Motor neuron (in vitro differentiated cells): ENCODE measurements at regions of chr20 and their contacts with region 1.

Region 1: DNA sequence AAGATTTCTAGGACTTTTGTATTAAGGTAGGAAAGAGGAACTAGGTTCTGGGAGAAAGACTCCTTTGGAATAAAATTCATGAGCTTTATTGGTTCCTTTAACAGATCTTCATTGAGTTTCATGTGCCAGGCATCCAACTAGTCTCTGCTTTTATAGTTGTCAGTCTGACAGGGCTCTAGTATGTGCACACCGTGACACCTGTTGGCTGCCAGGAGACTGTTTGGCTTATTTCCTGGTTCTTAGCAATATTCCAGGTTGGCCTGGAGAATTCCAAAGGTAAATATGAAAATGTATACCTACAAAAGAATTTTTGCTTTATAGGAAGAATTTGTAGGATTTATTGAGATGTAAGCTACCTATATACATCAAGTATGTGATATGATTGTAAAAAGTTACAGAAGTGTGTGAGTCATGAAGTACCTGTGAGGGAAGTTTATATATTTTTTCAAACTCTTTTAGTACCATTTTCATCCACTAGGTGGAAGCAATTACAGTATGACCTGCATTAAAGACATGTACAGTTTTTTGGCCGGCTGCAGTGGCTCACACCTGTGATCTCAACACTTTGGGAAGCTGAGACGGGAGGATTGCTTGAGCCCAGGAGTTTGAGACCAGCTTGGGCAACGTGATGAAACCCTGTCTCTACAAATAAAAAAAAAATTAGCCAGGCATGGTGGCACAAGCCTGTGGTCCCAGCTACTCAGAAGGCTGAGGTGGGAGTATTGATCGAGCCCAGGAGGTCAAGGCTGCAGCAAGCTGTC is 35.2 kb downstream of the NDUFAF5 start:
- ATAC-seq: peak in 6 of 8 experiments; percentile 10 to 53 (median 38)
- H3K4me3 ChIP-seq: no peak overlapping the region
- H3K27ac ChIP-seq: no peak overlapping the region
- H3K4me1 ChIP-seq: no peaks in the 10 kb centered on the region

Region 2: DNA sequence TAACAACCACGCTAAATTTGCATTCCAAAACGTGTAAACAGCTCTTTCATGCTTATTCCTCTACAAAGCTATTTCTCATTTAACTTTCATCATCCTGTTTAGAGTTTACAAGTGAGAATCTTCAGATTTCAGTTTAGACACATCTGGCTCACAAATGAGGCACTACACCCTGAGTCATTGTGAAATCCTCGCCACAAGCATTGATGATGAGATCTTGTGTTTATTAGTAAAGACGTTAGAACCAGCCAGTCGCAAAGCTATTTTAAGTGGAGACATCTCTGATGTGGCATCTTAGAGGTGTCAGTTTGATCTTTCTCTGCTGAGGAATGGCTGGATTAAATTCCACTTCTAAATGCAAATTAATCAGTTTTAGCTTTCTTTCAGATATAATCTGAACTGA is 607.3 kb before region 1 on chr20:
- in situ Hi-C with region 1: no loop called
- ATAC-seq: peak in 3 of 8 experiments; percentile 14 to 95 (median 89)
- H3K4me3 ChIP-seq: no peak overlapping the region
- H3K27ac ChIP-seq: no peak overlapping the region
- H3K4me1 ChIP-seq: no peaks in the 10 kb centered on the region

Region 3: GRCh38 chr20:14049111-14049510 is 229.0 kb after region 1 on chr20:
- in situ Hi-C with region 1: loop called in 7 of 9 experiments (anchors 10 to 25 kb)
- ATAC-seq: no peak
- H3K4me3 ChIP-seq: no peak overlapping the region
- H3K27ac ChIP-seq: no peak overlapping the region
- H3K4me1 ChIP-seq: no peaks in the 10 kb centered on the region

Region 4: GRCh38 chr20:14055127-14055742 is 235.2 kb after region 1 on chr20:
- in situ Hi-C with region 1: loop called in 6 of 9 experiments (anchors 10 to 25 kb)
- ATAC-seq: peak in 4 of 8 experiments; percentile 20 to 51 (median 34)
- H3K4me3 ChIP-seq: no peak overlapping the region
- H3K27ac ChIP-seq: no peak overlapping the region
- H3K4me1 ChIP-seq: no peaks in the 10 kb centered on the region